Mammary epithelial cell (primary cell): ENCODE measurements at regions of chr3 and their contacts with region 1.

Region 1: DNA sequence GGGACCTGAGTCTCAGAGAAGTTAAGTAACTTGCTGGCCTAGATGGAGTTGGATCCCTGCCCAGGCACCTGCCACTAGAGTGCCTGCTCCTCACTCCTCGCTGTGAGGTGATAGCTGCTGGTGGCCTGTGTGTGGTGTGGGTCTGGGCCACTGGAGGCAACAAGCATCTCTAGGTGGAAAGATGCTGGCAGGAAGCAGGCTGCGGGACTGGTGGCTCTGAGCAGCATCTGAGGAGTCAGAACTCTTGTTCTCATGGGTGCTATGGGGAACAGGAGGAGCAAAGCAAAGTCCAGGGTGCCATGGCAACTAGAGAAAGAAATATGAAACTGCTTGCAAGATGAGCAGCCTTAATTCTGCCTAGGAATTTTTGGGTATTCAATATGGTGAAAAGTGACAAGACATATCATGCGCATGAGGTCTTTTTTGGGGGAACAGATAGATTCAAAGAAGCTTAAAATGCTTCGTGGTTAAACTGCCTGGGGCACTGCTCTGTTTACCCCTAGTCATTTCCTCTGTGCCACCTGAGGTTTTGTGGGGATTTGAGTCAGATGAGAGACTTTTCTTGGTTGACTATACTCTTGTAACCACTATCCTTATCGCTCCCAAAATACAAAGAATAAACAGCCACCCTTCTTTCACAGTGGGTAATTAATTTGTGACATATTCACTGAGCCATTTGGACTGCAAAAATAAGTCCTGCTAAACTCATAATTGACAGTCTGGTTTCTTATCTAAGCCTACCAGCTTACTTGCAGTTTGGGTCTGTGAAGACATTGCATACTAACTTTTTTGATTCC is 50.3 kb downstream of the MED12L start:
- DNase-seq: no peak
- H3K4me3 ChIP-seq: no peak overlapping the region
- H3K27ac ChIP-seq: no peak overlapping the region
- H3K4me1 ChIP-seq: no peaks in the 10 kb centered on the region
- H3K27me3 ChIP-seq: no peaks in the 10 kb centered on the region
- CTCF ChIP-seq: no peak

Region 2: GRCh38 chr3:150710097-150710496 is 425.6 kb before region 1 on chr3:
- CTCF ChIA-PET with region 1: no interaction called
- dilution Hi-C with region 1: no loop called
- in situ Hi-C with region 1: loop called in 1 of 2 experiments (anchors 10 kb)
- intact Hi-C with region 1: no loop called
- DNase-seq: peak; percentile 87
- H3K4me3 ChIP-seq: no peak overlapping the region
- H3K27ac ChIP-seq: no peak overlapping the region
- H3K4me1 ChIP-seq: no peaks in the 10 kb centered on the region
- H3K27me3 ChIP-seq: no peaks in the 10 kb centered on the region
- CTCF ChIP-seq: no peak